ENCODE measurements at regions of chr15 and their contacts with region 1.

Region 1: DNA sequence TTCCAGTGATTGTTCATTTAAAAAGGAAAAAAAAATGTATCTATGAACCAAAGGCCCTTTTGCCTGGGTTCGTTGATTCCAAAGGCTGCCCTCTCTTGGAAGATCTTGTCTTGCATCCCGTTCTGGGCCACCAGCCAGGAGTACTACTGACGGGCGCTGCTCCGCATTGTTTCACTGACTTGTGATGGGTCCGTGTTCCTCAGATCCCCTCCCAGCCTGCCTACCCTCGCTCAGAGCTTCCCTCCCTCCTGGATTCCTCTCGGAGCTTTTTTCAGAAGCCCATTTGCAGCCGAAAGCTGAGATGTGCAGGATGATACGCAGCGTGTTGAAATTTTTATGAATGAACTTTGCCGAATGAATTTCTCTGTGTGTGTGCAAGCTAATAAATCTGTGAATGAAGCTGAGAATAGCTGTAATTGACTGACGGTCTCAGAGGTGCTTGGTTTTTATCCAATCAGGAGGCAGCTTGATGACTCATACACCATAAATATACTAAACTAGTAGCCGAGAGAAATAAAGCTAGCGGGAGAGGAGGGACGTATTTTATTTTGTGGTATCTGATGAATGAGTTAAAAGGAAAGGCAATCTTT is at the start of gene SHC4:
- DNase-seq: peak; percentile 65 to 75
- H3K4me3 ChIP-seq: peak within 1 kb of the TSS; percentile 60 to 61
- H3K27ac ChIP-seq: peak within 1 kb of the TSS; percentile 43 to 69
- H3K4me1 ChIP-seq: peaks cover 0 to 68% (median 46%) of the 10 kb centered on the region in 4 donors
- H3K27me3 ChIP-seq: no peaks in the 10 kb centered on the region
- CTCF ChIP-seq: no peak

Region 2: DNA sequence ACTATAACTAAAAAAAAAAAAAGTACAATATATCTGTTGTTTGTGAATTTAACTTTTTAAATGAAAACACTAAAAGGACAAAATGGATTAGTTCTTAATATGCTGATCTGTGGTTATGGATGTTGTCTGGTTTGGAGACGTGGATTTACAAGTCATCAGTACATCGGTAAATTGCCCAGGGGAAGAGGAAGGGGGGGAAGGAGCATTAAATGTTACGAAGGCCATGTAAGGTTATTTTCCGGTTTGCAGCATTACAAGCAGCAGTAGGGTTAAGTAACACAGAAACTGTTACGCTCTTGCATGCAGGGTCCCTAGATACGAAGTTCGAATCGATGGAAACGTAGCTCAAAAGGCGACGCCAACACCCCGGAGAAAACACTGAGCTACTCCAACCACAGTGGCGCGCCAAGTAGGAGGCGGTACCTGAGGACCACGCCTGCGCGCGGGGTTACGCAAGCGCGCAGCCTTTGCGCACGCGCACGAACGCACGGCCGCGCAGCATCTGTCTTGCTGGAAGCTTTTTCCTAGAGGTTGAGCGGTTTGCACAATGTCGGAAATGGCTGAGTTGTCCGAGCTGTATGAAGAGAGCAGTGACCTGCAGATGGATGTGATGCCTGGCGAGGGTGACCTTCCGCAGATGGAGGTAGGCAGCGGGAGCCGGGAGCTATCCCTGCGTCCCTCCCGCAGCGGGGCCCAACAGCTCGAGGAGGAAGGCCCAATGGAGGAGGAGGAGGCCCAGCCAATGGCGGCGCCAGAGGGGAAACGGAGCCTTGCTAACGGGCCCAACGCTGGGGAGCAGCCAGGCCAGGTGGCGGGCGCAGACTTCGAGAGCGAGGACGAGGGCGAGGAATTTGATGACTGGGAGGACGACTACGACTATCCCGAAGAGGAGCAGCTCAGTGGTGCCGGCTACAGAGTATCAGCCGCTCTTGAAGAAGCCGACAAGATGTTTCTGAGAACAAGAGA is 85.7 kb before region 1 on chr15 and contains the start of gene EID1:
- intact Hi-C with region 1: loop called (anchors 5 kb)
- DNase-seq: peak; percentile 93 to 97
- H3K4me3 ChIP-seq: peak within 1 kb of the TSS; percentile 79 to 83
- H3K27ac ChIP-seq: peak within 1 kb of the TSS; percentile 90 to 91
- H3K4me1 ChIP-seq: peaks cover 0 to 22% (median 8%) of the 10 kb centered on the region in 4 donors
- H3K27me3 ChIP-seq: no peaks in the 10 kb centered on the region
- CTCF ChIP-seq: peak in 1 of 2 experiments; percentile 5

Measured in tibial artery (tissue), 4 donors.